ENCODE measurements at regions of chr12 and their contacts with region 1.

Region 1: DNA sequence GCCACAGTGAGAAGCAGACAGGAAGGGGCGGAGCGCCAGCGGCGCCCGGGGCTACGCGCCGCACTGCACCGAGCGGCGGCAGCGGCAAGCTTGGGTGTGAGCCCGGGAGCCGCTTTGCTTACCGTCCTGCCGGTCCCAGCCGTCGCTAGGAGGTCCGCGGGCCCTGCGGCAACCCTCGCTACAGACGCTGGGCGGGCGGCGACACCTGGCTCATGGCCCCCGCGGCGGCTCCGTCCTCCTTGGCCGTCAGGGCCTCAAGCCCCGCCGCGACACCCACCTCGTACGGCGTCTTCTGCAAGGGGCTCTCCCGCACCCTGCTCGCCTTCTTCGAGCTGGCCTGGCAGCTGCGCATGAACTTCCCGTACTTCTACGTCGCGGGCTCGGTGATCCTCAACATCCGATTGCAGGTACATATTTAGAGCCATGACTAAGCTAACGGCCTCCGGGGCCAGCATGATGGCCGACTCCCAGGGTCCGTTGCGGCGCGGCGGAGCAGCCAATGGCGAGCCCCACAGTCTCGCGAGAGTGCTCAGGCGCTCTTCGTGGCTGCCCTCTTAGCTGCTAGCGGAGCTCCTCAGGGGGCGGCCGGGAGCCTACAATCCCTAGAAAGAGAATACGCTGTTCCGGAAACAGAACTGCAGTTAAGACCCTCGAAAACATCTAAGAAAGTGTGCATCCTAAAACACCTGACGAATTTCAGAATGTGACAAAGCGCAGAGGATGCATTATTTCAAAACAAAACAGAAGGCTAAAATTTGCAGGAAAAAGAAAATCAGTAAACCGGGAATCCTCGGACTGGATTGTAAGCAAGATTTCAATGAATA is at the start of gene SMIM10L1:
- DNase-seq: peak; percentile 84 to 88 (median 87)
- H3K4me3 ChIP-seq: peak within 1 kb of the TSS; percentile 70 to 95
- H3K4me3 Mint-ChIP-seq: peak within 1 kb of the TSS; percentile 98 to 100 (median 99)
- H3K27ac ChIP-seq: peak within 1 kb of the TSS; percentile 54
- H3K27ac Mint-ChIP-seq: peak within 1 kb of the TSS; percentile 97 to 99 (median 99)
- H3K4me1 ChIP-seq: peaks cover 51% of the 10 kb centered on the region
- H3K4me1 Mint-ChIP-seq: peaks cover 44 to 81% (median 55%) of the 10 kb centered on the region in 4 donors
- H3K27me3 ChIP-seq: no peaks in the 10 kb centered on the region
- H3K27me3 Mint-ChIP-seq: no peaks in the 10 kb centered on the region
- total RNA-seq, gene SMIM10L1: 11.6 to 11.9 TPM

Region 2: DNA sequence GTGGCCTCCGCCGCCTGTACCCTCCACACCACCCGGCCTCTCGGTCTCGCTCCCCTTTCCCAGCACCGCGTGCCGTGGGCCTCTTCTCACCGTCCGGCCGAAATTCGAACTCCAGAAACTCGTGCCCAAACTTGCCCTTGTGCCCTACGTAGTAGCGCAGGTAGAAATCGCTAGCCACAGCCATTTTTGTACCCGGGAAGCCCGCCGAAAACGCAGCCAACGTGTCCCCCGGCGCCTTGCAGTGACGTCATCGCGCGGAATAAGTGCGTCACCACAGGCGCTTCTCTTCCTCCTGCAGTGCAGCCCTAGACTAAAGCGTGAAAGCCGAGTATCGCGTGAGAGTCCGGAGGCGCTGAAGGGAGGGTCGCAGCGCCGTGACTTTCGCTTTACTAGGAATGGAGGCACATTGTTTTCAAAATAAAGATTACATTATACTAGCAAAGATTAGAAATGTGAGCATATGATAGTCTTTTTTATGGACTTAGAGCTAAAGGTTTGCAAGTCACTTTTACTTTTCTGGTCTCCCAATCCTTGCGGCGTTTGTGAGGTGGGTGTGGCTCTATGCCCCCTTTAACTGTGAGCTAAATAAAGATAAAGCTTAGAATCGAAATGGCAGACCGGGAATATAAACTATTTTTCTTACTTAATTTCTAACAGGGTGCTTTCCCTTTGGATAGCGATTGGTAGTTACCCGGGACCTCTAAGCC is 557.9 kb before region 1 on chr12 and contains the start of gene MAGOHB:
- CTCF ChIA-PET with region 1: no interaction called
- POLR2A ChIA-PET with region 1: interaction called, 3 read pairs
- intact Hi-C with region 1: loop called (anchors 5 kb)
- DNase-seq: peak; percentile 96 to 98 (median 96)
- H3K4me3 ChIP-seq: peak within 1 kb of the TSS; percentile 92 to 96
- H3K4me3 Mint-ChIP-seq: peak within 1 kb of the TSS; percentile 99 to 100 (median 100)
- H3K27ac ChIP-seq: peak within 1 kb of the TSS; percentile 93
- H3K27ac Mint-ChIP-seq: peak within 1 kb of the TSS; percentile 99 to 100 (median 100)
- H3K4me1 ChIP-seq: peaks cover 22% of the 10 kb centered on the region
- H3K4me1 Mint-ChIP-seq: peaks cover 20 to 36% (median 27%) of the 10 kb centered on the region in 4 donors
- H3K27me3 ChIP-seq: no peaks in the 10 kb centered on the region
- H3K27me3 Mint-ChIP-seq: peaks cover 5 to 10% of the 10 kb centered on the region in 2 donors
- total RNA-seq, gene MAGOHB: 19.3 to 22.0 TPM

Region 3: GRCh38 chr12:10771132-10771733 is 400.1 kb before region 1 on chr12:
- CTCF ChIA-PET with region 1: interaction called, 11 read pairs
- POLR2A ChIA-PET with region 1: no interaction called
- intact Hi-C with region 1: no loop called
- DNase-seq: peak in 4 of 5 donors; percentile 45 to 57 (median 50)
- H3K4me3 ChIP-seq: no peak overlapping the region
- H3K4me3 Mint-ChIP-seq: no peak overlapping the region
- H3K27ac ChIP-seq: no peak overlapping the region
- H3K27ac Mint-ChIP-seq: no peak overlapping the region
- H3K4me1 ChIP-seq: no peaks in the 10 kb centered on the region
- H3K4me1 Mint-ChIP-seq: no peaks in the 10 kb centered on the region
- H3K27me3 ChIP-seq: peaks cover 3% of the 10 kb centered on the region
- H3K27me3 Mint-ChIP-seq: peaks cover 24 to 27% of the 10 kb centered on the region in 2 donors

Region 4: DNA sequence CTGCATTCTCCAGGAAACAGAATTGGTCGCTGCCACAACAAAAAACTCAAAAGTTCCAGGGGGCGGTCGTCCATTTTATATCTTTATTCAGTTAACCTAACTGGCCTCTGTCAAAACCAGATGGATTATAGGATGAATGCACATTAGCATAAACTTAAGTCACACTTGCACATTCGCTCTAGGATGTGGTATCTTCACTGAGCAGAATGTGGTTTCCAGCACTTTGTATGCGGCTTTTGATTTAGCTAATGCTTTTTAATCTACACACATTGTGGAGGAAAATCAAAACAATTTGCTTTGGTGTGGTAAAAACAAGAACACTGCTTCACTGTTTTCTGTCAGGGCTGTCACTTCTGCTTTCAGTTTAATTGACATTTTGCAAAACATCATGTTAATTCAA is 189.1 kb before region 1 on chr12:
- CTCF ChIA-PET with region 1: no interaction called
- POLR2A ChIA-PET with region 1: interaction called, 10 read pairs
- intact Hi-C with region 1: no loop called
- DNase-seq: peak; percentile 70 to 89 (median 85)
- H3K4me3 ChIP-seq: no peak overlapping the region
- H3K4me3 Mint-ChIP-seq: peak overlapping the region in 7 of 8 donors; percentile 24 to 82 (median 62)
- H3K27ac ChIP-seq: no peak overlapping the region
- H3K27ac Mint-ChIP-seq: peak overlapping the region in 5 of 7 donors; percentile 10 to 45 (median 28)
- H3K4me1 ChIP-seq: peaks cover 23% of the 10 kb centered on the region
- H3K4me1 Mint-ChIP-seq: peaks cover 20 to 44% (median 31%) of the 10 kb centered on the region in 4 donors
- H3K27me3 ChIP-seq: no peaks in the 10 kb centered on the region
- H3K27me3 Mint-ChIP-seq: peaks cover 2 to 9% of the 10 kb centered on the region in 2 donors

Region 5: GRCh38 chr12:11545484-11546330 is 374.4 kb after region 1 on chr12:
- CTCF ChIA-PET with region 1: no interaction called
- POLR2A ChIA-PET with region 1: interaction called, 16 read pairs
- intact Hi-C with region 1: loop called (anchors 5 kb)
- DNase-seq: peak; percentile 78 to 82 (median 80)
- H3K4me3 ChIP-seq: peak overlapping the region in 1 of 2 donors; percentile 14
- H3K4me3 Mint-ChIP-seq: peak overlapping the region; percentile 71 to 88 (median 78)
- H3K27ac ChIP-seq: peak overlapping the region; percentile 57
- H3K27ac Mint-ChIP-seq: peak overlapping the region; percentile 94 to 99 (median 96)
- H3K4me1 ChIP-seq: peaks cover 55% of the 10 kb centered on the region
- H3K4me1 Mint-ChIP-seq: peaks cover 32 to 68% (median 51%) of the 10 kb centered on the region in 4 donors
- H3K27me3 ChIP-seq: no peaks in the 10 kb centered on the region
- H3K27me3 Mint-ChIP-seq: no peaks in the 10 kb centered on the region